Left ventricle myocardium superior (tissue), 1 donor: ENCODE measurements at regions of chr20 and their contacts with region 1.

Region 1: DNA sequence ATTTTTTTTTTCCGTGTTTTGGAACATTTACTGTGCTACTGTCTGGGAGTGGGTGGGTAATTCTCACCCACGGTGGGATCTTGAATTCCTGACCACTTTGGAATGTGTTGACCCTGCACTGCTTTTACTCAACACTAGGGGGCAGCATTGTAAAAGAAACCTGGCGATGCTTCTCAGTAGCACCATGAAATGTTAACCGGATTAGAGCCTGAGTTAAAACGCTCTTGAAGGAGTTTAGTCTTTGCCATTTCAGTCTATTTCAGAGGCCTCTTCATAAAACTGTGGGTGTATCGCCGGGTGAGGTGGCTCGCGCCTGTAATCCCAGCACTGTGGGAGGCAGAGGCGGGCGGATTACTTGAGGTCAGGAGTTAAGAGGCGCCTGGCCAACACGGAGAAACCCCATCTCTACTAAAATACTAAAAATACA is 114.4 kb upstream of the PRND start:
- DNase-seq: no peak
- ATAC-seq: peak; percentile 82

Region 2: DNA sequence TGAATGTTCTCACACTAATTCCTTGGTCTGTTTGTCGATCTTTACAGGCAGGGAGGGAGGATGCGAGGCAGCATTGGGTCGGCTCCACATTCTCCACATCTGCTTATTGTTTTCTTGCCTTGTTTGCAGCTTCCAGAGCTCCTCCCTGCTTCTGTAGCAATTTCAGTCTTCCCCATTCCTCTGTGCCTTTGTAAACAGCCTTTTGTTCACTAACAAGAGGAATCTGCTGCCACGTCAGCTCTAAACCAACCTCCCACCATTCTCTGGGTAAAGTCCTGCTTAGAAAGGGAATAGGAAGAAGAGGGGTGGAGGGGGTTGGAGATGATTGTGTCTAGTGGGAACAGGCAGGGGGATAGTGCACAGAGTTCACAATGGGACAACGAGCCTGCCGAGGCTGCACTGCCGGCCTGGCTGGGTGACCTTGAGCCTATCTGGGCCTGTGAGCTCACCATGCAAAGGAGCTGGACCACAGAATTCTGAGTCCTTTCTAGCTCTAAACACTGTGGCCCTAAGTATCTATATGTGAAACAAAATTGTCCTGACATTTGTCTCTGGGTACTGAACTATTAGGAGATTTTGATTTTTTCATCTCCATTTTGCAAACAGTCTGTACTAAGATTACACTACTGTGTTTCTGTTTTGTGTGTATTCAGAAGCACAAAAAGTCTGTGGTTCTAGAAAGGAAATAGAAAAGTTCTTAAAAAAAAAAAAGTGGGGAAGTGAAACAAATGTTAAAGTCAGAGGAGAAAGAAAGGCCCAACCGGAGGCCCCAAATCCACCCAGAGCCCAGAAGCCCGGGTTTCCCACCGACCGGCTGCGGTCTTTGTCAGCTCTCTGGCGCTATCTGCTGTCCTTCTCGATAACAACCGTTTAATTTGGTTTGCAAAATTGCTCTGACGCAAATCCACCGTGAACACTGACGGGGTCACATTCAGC is 113.0 kb after region 1 on chr20:
- intact Hi-C with region 1: loop called (anchors 1 kb)
- DNase-seq: peak; percentile 79
- ATAC-seq: peak; percentile 90

Region 3: GRCh38 chr20:5282561-5282960 is 675.3 kb after region 1 on chr20:
- intact Hi-C with region 1: no loop called
- DNase-seq: no peak
- ATAC-seq: no peak